ENCODE measurements at regions of chr19 and their contacts with region 1.

Region 1: GRCh38 chr19:5622463-5623396 is at the starts of genes SAFB and SAFB2:
- H3K4me3 ChIP-seq: peak within 1 kb of the TSS; percentile 93
- H3K27ac ChIP-seq: peak within 1 kb of the TSS; percentile 89
- H3K4me1 ChIP-seq: peaks cover 18% of the 10 kb centered on the region
- CTCF ChIP-seq: no peak; the same call in 1 of the 2 replicates

Region 2: DNA sequence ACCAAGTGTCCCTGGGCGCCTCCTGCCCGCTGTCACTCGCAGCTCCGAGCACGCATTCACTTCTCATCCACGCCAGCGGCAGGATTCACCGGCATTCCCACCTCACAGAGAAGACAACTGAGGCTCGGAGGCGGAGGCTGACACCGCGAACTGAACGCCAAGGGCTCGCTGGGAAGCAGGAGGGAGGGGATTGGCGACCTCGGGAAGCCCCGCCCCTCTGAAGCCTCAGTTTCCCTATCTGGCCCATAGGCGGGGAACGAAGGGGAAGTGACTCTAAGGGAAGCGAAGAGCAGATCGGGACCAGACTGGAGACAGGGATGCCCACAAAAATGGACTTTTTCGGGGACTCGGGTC is 57.3 kb after region 1 on chr19:
- CTCF ChIA-PET with region 1: no interaction called
- POLR2A ChIA-PET with region 1: interaction called, 12 read pairs
- H3K4me3 ChIP-seq: peak overlapping the region; percentile 94
- H3K27ac ChIP-seq: peak overlapping the region; percentile 25; the same call in 1 of the 2 replicates
- H3K4me1 ChIP-seq: no peaks in the 10 kb centered on the region
- CTCF ChIP-seq: peak; percentile 67; the same call in 1 of the 2 replicates